ENCODE measurements at regions of chr1 and their contacts with region 1.

Region 1: DNA sequence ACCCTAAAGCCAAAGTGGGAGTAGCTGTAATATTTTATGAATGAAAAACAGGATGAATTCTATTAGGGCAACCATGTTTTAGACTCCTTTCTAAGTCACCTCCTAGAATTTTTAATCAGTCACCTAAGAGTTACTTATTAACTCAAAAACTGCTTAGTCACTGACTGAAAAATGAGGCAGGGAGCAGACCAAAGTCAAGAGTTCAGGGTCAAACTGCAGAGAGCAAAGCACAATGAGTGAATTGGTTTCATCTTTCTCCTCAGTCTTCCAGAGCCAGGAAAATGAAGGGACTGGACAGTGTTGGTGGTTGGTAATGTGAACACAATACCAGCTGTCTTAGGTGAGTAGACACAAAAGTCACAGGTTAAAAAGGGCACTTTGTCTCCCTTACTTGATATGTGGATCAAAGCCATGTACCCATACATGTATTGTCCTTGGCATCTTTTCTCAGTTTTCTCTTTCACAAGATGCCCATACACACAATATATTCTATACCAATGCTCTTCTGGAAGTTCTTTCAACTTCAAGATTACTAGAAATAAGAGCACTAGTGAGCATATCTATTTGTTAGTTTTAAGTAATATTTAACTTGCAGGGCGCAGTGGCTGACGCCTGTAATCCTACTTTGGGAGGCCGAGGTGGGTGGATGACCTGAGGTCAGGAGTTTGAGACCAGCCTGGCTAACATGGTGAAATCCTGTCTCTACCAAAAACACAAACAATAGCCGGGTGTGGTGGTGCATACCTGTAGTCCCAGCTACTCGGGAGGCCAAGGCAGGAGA is 42.2 kb downstream of the ATP1B1 start:
- DNase-seq: no peak
- ATAC-seq: peak; percentile 43 to 82 (median 68)
- H3K4me3 ChIP-seq: no peak overlapping the region
- H3K27ac ChIP-seq: peak overlapping the region; percentile 52
- H3K4me1 ChIP-seq: peaks cover 20% of the 10 kb centered on the region
- H3K27me3 ChIP-seq: no peaks in the 10 kb centered on the region
- CTCF ChIP-seq: no peak

Region 2: DNA sequence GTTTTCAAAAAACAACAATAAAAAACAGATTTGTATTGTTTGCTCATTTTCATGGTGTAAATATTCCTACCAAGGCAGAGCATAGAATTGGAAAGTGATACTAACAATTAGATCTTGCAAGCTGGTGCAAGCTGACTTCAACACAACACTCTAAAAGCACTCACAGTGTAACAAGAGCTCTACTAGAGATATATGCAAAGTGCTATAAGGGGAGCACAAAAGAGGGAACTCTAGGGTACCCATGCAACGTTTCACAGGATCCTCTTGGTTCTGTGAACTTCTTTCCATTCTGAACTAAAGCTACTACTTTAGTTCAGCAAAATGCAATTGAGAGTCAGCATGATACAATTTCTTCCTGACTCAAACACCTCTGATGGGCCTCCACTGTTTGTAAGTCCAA is 36.1 kb after region 1 on chr1:
- intact Hi-C with region 1: loop called in 1 of 2 experiments (anchors 5 kb)
- DNase-seq: no peak
- ATAC-seq: peak in 1 of 4 donors; percentile 33
- H3K4me3 ChIP-seq: no peak overlapping the region
- H3K27ac ChIP-seq: peak overlapping the region; percentile 36
- H3K4me1 ChIP-seq: peaks cover 33% of the 10 kb centered on the region
- H3K27me3 ChIP-seq: no peaks in the 10 kb centered on the region
- CTCF ChIP-seq: no peak

Region 3: GRCh38 chr1:169443923-169444322 is 295.3 kb after region 1 on chr1:
- intact Hi-C with region 1: no loop called
- DNase-seq: no peak
- ATAC-seq: no peak
- H3K4me3 ChIP-seq: no peak overlapping the region
- H3K27ac ChIP-seq: no peak overlapping the region
- H3K4me1 ChIP-seq: no peaks in the 10 kb centered on the region
- H3K27me3 ChIP-seq: peaks cover 0 to 2% (median 0%) of the 10 kb centered on the region in 3 donors
- CTCF ChIP-seq: no peak